ENCODE measurements at regions of chr9 and their contacts with region 1.

Region 1: GRCh38 chr9:131068076-131068816 is 28.1 kb upstream of the AIF1L start:
- DNase-seq: no peak
- H3K4me3 ChIP-seq: no peak overlapping the region
- H3K27ac ChIP-seq: no peak overlapping the region
- H3K4me1 ChIP-seq: no peaks in the 10 kb centered on the region
- H3K27me3 ChIP-seq: no peaks in the 10 kb centered on the region
- CTCF ChIP-seq: no peak
- POLR2A ChIP-seq: no peak

Region 2: GRCh38 chr9:129071526-129072131 is 1996.6 kb before region 1 on chr9:
- intact Hi-C with region 1: loop called (anchors 5 kb)
- DNase-seq: no peak
- H3K4me3 ChIP-seq: no peak overlapping the region
- H3K27ac ChIP-seq: no peak overlapping the region
- H3K4me1 ChIP-seq: no peaks in the 10 kb centered on the region
- H3K27me3 ChIP-seq: no peaks in the 10 kb centered on the region
- CTCF ChIP-seq: no peak
- POLR2A ChIP-seq: no peak